ENCODE measurements at regions of chr2 and their contacts with region 1.

Region 1: GRCh38 chr2:181466661-181467576 is 9.7 kb downstream of the ITGA4 start:
- DNase-seq: peak; percentile 78
- ATAC-seq: no peak

Region 2: DNA sequence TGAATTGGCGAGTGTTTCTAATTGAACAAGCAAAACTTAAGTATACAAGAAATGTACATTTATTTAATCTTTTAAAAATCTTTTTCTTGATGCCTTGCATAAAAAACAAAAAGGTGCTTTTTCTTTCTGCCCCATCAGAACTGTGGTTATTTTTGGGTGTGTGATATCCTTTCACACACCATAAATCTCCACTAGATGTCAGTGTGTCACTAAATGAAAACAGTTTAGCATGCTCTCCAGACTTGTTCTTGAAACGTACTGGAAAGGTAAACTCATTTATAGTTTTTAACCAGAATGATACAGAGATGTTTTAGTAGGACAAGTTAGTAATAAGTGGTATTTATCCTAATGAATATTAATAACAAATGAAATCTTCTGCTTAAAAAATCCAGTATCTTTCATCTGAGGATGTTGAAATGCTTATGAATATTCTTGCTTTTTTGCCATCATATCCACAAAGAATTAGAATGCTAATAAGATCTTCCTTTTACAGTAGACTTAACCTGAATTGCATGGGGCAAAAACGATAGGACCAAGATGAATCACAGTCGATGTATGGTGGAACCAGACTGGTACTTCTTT is 389.7 kb before region 1 on chr2:
- intact Hi-C with region 1: loop called (anchors 5 kb)
- DNase-seq: no peak
- ATAC-seq: no peak

Region 3: DNA sequence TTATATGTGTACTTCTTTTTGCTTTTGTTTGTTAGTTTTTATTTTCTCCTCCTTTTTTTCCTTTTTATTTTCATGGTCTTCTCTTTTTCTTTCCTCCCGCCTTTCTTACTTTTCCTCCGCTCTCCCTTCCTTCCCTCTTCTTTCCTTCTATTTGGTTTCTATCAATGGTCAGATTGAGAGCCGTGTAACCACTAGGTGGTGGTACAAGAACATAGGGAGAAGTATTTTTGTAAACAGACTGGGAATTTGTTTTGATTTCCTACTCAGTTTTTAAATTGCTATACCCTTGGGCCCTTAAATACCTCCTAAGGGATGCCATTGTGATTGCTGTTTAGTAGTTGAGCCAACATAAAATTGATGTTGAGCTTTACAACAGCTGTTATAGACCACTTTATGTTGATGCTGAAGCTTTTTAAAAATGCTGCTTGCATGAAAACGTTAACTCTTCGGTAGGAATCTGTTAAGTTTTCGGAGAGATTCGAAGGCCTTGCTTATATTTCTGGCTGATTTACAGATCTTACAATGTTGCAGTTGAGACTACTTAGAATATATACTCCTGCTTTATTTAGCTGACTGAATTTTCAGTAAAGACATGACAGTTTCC is 362.3 kb before region 1 on chr2:
- intact Hi-C with region 1: loop called (anchors 2 kb)
- DNase-seq: no peak
- ATAC-seq: no peak

Region 4: GRCh38 chr2:181305301-181306123 is 161.4 kb before region 1 on chr2:
- intact Hi-C with region 1: loop called (anchors 10 kb)
- DNase-seq: peak; percentile 45
- ATAC-seq: peak; percentile 97

Region 5: GRCh38 chr2:181573140-181573736 is 106.3 kb after region 1 on chr2:
- intact Hi-C with region 1: no loop called
- DNase-seq: no peak
- ATAC-seq: no peak